IMR-90 (cell line): ENCODE measurements at regions of chr1 and their contacts with region 1.

Region 1: DNA sequence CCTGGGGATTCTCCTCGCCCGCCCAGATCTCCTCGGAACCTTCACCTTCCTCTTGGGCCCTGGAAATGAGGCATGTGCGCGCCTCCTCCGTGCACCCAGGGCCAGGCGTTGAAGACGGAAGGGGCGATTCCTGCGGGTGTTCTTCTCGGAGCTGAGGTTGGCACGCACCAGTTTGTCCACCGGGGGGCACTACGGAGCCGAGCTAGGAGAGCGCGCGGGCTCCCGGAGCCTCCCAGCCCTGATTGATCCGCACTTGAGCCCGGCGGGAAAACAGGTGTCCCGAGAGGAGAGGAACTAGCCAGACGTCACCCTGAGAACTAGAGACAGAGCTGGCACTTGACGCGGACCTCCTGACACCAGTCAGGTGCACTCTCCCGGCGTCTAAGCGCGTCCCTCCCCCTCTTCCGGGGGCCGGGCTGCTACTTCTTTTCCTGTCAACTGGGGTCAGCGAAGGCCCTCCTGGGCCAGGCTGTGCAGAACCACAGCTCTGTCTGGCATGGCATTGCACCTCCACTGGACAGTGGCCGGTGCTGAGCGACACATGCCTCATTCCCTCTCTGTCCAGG is 18.3 kb upstream of the SERINC2 start:
- DNase-seq: peak; percentile 75
- ATAC-seq: peak; percentile 92
- H3K4me3 ChIP-seq: no peak overlapping the region
- H3K27ac ChIP-seq: no peak overlapping the region
- H3K4me1 ChIP-seq: peaks cover 14% of the 10 kb centered on the region
- H3K27me3 ChIP-seq: peaks cover under 1% of the 10 kb centered on the region; the same call in 1 of the 2 replicates
- CTCF ChIP-seq: peak; percentile 96
- POLR2A ChIP-seq: no peak
- RAD21 ChIP-seq: peak; percentile 87

Region 2: GRCh38 chr1:31264790-31265386 is 129.8 kb before region 1 on chr1:
- CTCF ChIA-PET with region 1: no interaction called
- POLR2A ChIA-PET with region 1: no interaction called
- dilution Hi-C with region 1: no loop called
- in situ Hi-C with region 1: no loop called
- intact Hi-C with region 1: no loop called
- DNase-seq: no peak
- ATAC-seq: no peak
- H3K4me3 ChIP-seq: no peak overlapping the region
- H3K27ac ChIP-seq: no peak overlapping the region
- H3K4me1 ChIP-seq: no peaks in the 10 kb centered on the region
- H3K27me3 ChIP-seq: no peaks in the 10 kb centered on the region
- CTCF ChIP-seq: no peak
- POLR2A ChIP-seq: no peak
- RAD21 ChIP-seq: no peak

Region 3: DNA sequence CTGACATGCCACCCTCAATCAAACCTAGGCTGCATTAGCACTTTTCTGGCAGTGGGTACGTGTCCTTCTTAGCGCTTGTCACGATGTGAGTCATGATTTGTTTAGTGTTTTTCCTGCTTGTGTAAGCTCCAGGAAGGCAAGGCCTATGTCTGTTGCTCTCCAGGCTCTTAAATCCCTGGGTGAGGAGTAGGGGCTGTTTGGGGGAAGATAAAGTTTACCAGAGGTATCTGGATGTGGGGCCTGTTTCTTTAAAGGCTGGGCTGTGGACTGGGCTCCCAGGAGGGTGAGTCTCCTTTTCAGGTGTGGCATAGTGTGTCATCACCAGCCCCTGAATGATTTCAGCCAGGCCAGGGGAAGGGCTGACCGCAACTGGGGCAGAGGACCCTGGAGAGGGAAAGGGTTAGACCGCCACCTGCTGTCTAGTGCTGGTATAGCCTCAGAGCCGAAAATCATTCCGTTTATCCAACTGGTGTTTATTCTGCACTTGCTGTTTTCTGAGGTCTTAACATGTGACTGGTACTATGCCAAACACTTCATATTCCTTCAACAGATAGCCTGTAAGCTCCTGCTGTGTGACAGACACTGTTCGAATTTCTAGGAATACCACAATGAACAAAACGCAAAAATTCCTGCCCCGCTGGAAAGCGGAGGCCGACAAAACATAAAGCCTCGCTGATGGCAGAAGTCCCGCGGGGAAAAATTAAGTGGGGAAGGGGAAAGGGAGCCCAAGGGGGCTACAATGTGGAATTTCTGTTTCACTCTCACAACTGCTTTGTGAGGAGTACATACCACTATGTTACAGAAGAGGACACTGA is 28.0 kb after region 1 on chr1:
- CTCF ChIA-PET with region 1: interaction called, 61 read pairs
- POLR2A ChIA-PET with region 1: interaction called, 5 read pairs
- dilution Hi-C with region 1: no loop called
- in situ Hi-C with region 1: no loop called
- intact Hi-C with region 1: loop called (anchors 1 kb)
- DNase-seq: peak; percentile 90
- ATAC-seq: peak; percentile 94
- H3K4me3 ChIP-seq: no peak overlapping the region
- H3K27ac ChIP-seq: peak overlapping the region; percentile 24; the same call in 1 of the 2 replicates
- H3K4me1 ChIP-seq: peaks cover 10% of the 10 kb centered on the region
- H3K27me3 ChIP-seq: no peaks in the 10 kb centered on the region
- CTCF ChIP-seq: peak; percentile 94
- POLR2A ChIP-seq: no peak
- RAD21 ChIP-seq: peak; percentile 97

Region 4: GRCh38 chr1:31444725-31445448 is 50.2 kb after region 1 on chr1:
- CTCF ChIA-PET with region 1: no interaction called
- POLR2A ChIA-PET with region 1: no interaction called
- dilution Hi-C with region 1: no loop called
- in situ Hi-C with region 1: no loop called
- intact Hi-C with region 1: no loop called
- DNase-seq: no peak
- ATAC-seq: no peak
- H3K4me3 ChIP-seq: no peak overlapping the region
- H3K27ac ChIP-seq: no peak overlapping the region
- H3K4me1 ChIP-seq: no peaks in the 10 kb centered on the region
- H3K27me3 ChIP-seq: peaks cover 27% of the 10 kb centered on the region
- CTCF ChIP-seq: no peak
- POLR2A ChIP-seq: no peak
- RAD21 ChIP-seq: no peak